ENCODE measurements at regions of chrX and their contacts with region 1.

Region 1: GRCh38 chrX:103211012-103211715 is 3.7 kb upstream of the BEX4 start:
- DNase-seq: peak; percentile 25
- ATAC-seq: peak; percentile 76; the same call in 1 of the 2 replicates
- H3K4me3 ChIP-seq: no peak overlapping the region
- H3K27ac ChIP-seq: no peak overlapping the region
- H3K4me1 ChIP-seq: peaks cover 5% of the 10 kb centered on the region; the same call in 1 of the 2 replicates
- H3K27me3 ChIP-seq: peaks cover 9% of the 10 kb centered on the region
- CTCF ChIP-seq: peak; percentile 78

Region 2: DNA sequence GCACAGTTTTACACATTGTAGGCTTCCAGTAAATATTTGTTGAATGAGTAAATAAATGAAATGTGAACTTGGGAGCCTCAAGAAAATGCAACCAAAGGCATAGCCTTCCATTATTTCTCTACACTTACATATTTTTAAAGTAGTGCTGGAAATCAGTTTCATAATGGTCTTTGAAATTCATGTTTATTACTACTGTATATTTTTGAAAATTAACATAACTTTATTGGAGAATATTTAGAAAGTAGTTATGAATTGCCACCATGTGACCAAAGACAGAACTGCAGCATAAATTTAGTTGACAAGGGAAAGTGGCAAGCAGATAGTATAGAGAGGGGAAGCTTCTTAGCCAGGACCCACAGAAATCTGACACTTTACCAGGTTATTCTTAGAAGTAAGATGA is 37.4 kb after region 1 on chrX:
- CTCF ChIA-PET with region 1: interaction called, 3 read pairs
- POLR2A ChIA-PET with region 1: interaction called, 3 read pairs
- in situ Hi-C with region 1: no loop called
- intact Hi-C with region 1: loop called (anchors 2 kb)
- DNase-seq: no peak
- ATAC-seq: no peak
- H3K4me3 ChIP-seq: no peak overlapping the region
- H3K27ac ChIP-seq: no peak overlapping the region
- H3K4me1 ChIP-seq: no peaks in the 10 kb centered on the region
- H3K27me3 ChIP-seq: peaks cover 6% of the 10 kb centered on the region; the same call in 1 of the 2 replicates
- CTCF ChIP-seq: peak; percentile 56; the same call in 1 of the 2 replicates

Region 3: GRCh38 chrX:103369479-103369878 is 158.3 kb after region 1 on chrX:
- CTCF ChIA-PET with region 1: no interaction called
- POLR2A ChIA-PET with region 1: no interaction called
- in situ Hi-C with region 1: no loop called
- intact Hi-C with region 1: no loop called
- DNase-seq: no peak
- ATAC-seq: no peak
- H3K4me3 ChIP-seq: no peak overlapping the region
- H3K27ac ChIP-seq: no peak overlapping the region
- H3K4me1 ChIP-seq: peaks cover 4% of the 10 kb centered on the region; the same call in 1 of the 2 replicates
- H3K27me3 ChIP-seq: no peaks in the 10 kb centered on the region
- CTCF ChIP-seq: no peak

Region 4: DNA sequence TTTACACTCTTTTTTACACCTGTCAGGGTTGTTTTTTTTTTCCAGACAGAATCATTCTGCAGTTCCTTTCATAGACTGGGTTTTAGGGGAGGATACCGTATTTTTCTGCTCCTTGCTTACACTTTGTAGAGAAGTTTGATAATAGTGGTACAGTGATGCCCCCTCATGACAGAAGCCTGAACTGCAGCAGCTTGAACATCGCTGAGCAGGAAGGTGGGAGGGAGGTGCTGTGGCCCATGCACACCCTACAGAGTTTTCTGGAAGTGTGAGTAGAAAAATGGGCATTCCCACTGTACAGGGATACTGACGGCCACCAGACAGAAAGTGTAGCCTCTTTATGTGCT is 253.6 kb after region 1 on chrX:
- CTCF ChIA-PET with region 1: interaction called, 15 read pairs
- POLR2A ChIA-PET with region 1: no interaction called
- in situ Hi-C with region 1: no loop called
- intact Hi-C with region 1: loop called (anchors 1 kb)
- DNase-seq: peak; percentile 75
- ATAC-seq: peak; percentile 93
- H3K4me3 ChIP-seq: peak overlapping the region; percentile 28 to 48
- H3K27ac ChIP-seq: no peak overlapping the region
- H3K4me1 ChIP-seq: no peaks in the 10 kb centered on the region
- H3K27me3 ChIP-seq: peaks cover 4% of the 10 kb centered on the region; the same call in 1 of the 2 replicates
- CTCF ChIP-seq: peak; percentile 81

Measured in Panc1 (cell line).